ENCODE measurements at regions of chr2 and their contacts with region 1.

Region 1: GRCh38 chr2:46555011-46555410 is 75.6 kb downstream of the TMEM247 start:
- DNase-seq: no peak
- ATAC-seq: peak; percentile 56
- H3K4me3 Mint-ChIP-seq: no peak overlapping the region
- H3K27ac Mint-ChIP-seq: peak overlapping the region; percentile 71
- H3K4me1 Mint-ChIP-seq: peaks cover 97% of the 10 kb centered on the region
- H3K27me3 Mint-ChIP-seq: no peaks in the 10 kb centered on the region
- CTCF ChIP-seq: no peak

Region 2: GRCh38 chr2:46073540-46074018 is 481.4 kb before region 1 on chr2:
- CTCF ChIA-PET with region 1: no interaction called
- POLR2A ChIA-PET with region 1: no interaction called
- intact Hi-C with region 1: no loop called
- DNase-seq: no peak
- ATAC-seq: no peak
- H3K4me3 Mint-ChIP-seq: no peak overlapping the region
- H3K27ac Mint-ChIP-seq: no peak overlapping the region
- H3K4me1 Mint-ChIP-seq: no peaks in the 10 kb centered on the region
- H3K27me3 Mint-ChIP-seq: no peaks in the 10 kb centered on the region
- CTCF ChIP-seq: no peak

Region 3: GRCh38 chr2:46490521-46491141 is 64.4 kb before region 1 on chr2:
- CTCF ChIA-PET with region 1: interaction called, 11 read pairs
- POLR2A ChIA-PET with region 1: no interaction called
- intact Hi-C with region 1: no loop called
- DNase-seq: no peak
- ATAC-seq: peak; percentile 80
- H3K4me3 Mint-ChIP-seq: peak overlapping the region; percentile 15
- H3K27ac Mint-ChIP-seq: no peak overlapping the region
- H3K4me1 Mint-ChIP-seq: peaks cover 23% of the 10 kb centered on the region
- H3K27me3 Mint-ChIP-seq: no peaks in the 10 kb centered on the region
- CTCF ChIP-seq: no peak